ENCODE measurements at regions of chr14 and their contacts with region 1.

Region 1: DNA sequence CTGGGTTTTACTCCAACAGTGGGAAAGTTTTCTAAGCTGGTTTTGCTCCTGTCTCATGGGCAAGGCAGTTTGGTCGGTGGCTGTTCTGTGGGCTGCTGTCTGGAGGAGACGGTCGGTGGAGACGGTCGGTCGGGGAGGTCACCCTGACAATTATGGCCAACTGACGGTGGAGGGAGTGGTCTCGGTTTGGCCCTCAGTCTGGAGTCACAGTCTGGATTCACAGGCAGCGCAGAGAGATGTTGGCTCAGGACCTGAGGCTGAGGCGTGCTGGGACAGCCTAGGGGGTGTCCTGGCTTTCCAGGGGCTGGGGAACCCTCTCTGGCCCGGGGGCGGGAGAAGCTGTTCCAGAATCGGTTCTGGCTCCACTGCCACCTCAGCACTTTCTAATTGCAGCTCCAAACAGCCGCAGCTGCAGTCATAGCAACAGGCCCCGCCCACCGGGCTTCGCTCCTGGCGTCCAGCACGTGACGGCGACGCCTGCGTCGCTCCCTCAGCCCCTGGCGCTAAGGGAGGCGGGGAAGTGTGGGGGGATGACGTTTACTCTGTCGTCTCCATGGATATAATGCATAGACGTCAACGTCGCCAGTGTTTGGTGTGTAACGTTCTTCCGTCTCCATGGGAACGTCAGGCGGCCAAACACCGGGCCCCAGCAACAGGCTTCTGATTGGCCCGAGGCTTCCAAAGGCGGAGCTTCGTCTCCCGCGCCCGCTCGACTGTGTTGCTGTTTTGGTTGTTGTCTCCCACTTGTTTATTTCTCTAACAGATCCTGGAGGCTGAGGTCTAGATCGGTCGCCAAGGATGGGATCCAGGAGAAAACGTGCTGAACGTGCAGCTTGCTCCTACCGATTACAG is 19.8 kb upstream of the FOS start:
- DNase-seq: peak; percentile 100
- H3K4me3 ChIP-seq: peak overlapping the region; percentile 48
- H3K27ac ChIP-seq: peak overlapping the region; percentile 97
- H3K4me1 ChIP-seq: peaks cover 25% of the 10 kb centered on the region
- H3K27me3 ChIP-seq: no peaks in the 10 kb centered on the region
- CTCF ChIP-seq: no peak

Region 2: GRCh38 chr14:74881431-74882361 is 377.1 kb before region 1 on chr14 and contains the start of gene DLST:
- CTCF ChIA-PET with region 1: interaction called, 10 read pairs
- POLR2A ChIA-PET with region 1: no interaction called
- intact Hi-C with region 1: no loop called
- DNase-seq: peak; percentile 94
- H3K4me3 ChIP-seq: peak within 1 kb of the TSS; percentile 98
- H3K27ac ChIP-seq: peak within 1 kb of the TSS; percentile 96
- H3K4me1 ChIP-seq: peaks cover 12% of the 10 kb centered on the region
- H3K27me3 ChIP-seq: no peaks in the 10 kb centered on the region
- CTCF ChIP-seq: no peak
- total RNA-seq, gene DLST: 139 and 145 TPM in 2 replicates

Region 3: DNA sequence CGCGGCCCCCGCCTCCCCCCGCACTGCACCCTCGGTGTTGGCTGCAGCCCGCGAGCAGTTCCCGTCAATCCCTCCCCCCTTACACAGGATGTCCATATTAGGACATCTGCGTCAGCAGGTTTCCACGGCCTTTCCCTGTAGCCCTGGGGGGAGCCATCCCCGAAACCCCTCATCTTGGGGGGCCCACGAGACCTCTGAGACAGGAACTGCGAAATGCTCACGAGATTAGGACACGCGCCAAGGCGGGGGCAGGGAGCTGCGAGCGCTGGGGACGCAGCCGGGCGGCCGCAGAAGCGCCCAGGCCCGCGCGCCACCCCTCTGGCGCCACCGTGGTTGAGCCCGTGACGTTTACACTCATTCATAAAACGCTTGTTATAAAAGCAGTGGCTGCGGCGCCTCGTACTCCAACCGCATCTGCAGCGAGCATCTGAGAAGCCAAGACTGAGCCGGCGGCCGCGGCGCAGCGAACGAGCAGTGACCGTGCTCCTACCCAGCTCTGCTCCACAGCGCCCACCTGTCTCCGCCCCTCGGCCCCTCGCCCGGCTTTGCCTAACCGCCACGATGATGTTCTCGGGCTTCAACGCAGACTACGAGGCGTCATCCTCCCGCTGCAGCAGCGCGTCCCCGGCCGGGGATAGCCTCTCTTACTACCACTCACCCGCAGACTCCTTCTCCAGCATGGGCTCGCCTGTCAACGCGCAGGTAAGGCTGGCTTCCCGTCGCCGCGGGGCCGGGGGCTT is 19.8 kb after region 1 on chr14 and contains the start of gene FOS:
- CTCF ChIA-PET with region 1: no interaction called
- POLR2A ChIA-PET with region 1: interaction called, 4 read pairs
- intact Hi-C with region 1: loop called (anchors 1 kb)
- DNase-seq: peak; percentile 95
- H3K4me3 ChIP-seq: peak within 1 kb of the TSS; percentile 77
- H3K27ac ChIP-seq: peak within 1 kb of the TSS; percentile 100
- H3K4me1 ChIP-seq: peaks cover 23% of the 10 kb centered on the region
- H3K27me3 ChIP-seq: no peaks in the 10 kb centered on the region
- CTCF ChIP-seq: no peak
- total RNA-seq, gene FOS: 10.2 and 13.7 TPM in 2 replicates

Measured in A673 (cell line).